ENCODE measurements at regions of chr17 and their contacts with region 1.

Region 1: GRCh38 chr17:38464723-38465390 is 36.6 kb downstream of the ARHGAP23 start:
- DNase-seq: peak; percentile 94
- H3K4me3 Mint-ChIP-seq: peak overlapping the region; percentile 60
- H3K27ac Mint-ChIP-seq: peak overlapping the region; percentile 68
- H3K4me1 Mint-ChIP-seq: peaks cover 24% of the 10 kb centered on the region
- H3K27me3 Mint-ChIP-seq: peaks cover 14% of the 10 kb centered on the region
- CTCF ChIP-seq: no peak

Region 2: GRCh38 chr17:38451840-38452529 is 12.9 kb before region 1 on chr17:
- CTCF ChIA-PET with region 1: interaction called, 12 read pairs
- intact Hi-C with region 1: loop called (anchors 2 kb)
- DNase-seq: peak; percentile 73
- H3K4me3 Mint-ChIP-seq: peak overlapping the region; percentile 85
- H3K27ac Mint-ChIP-seq: peak overlapping the region; percentile 50
- H3K4me1 Mint-ChIP-seq: peaks cover 74% of the 10 kb centered on the region
- H3K27me3 Mint-ChIP-seq: peaks cover 36% of the 10 kb centered on the region
- CTCF ChIP-seq: no peak

Measured in Calu3 (cell line).